A549 (cell line): ENCODE measurements at regions of chr17 and their contacts with region 1.

Region 1: GRCh38 chr17:50783193-50783660 is 15.9 kb upstream of the ANKRD40CL start:
- DNase-seq: peak; percentile 96 to 99
- ATAC-seq: peak; percentile 97 to 99
- H3K4me3 ChIP-seq: no peak overlapping the region
- H3K27ac ChIP-seq: no peak overlapping the region
- H3K4me1 ChIP-seq: 0 out of 3 replicates have a peak, but pooled peaks cover 3% of the 10 kb centered on the region
- CTCF ChIP-seq: peak; percentile 98
- EP300 ChIP-seq: no peak
- POLR2A ChIP-seq: no peak
- RAD21 ChIP-seq: peak; percentile 97 to 98

Region 2: DNA sequence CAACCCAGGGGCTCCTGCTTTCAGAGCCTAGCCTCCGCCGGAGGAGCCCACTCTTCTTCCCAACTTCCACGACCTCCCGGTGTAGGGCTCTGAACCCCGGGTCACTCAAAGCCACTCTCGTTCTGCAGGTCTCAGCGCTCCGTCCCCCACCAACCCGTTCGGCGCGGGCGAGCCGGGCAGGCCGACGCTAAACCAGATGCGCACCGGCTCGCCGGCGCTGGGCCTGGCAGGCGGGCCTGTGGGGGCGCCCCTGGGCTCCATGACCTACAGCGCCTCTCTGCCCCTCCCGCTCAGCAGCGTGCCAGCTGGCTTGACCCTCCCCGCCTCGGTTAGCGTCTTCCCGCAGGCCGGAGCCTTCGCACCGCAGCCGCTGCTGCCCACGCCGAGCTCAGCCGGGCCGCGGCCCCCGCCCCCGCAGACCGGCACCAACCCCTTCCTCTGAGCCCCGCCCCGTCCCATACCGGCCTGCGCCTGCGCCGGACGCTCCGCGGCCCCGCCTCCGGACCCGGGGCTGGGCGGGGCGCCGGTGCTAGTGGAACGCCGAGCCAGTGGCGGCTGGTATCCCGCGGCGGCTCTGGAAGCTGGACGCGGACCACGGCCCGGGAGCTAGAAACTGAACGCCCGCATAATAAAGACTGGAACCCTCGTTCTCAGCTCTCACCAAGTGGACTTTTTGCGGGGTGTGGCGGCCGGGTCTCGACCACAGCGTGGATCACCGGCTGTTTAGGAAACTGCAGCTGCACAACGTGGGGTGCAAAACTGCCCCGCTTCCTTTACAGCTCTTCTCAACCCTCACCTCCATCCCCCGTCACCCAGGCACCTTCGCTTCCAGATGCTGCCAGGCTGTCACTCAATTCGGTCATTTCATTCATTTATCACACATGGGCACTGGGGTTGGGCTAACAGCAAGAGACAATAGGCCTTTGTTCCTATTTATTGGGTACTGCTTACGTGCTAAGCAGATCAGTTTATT is 241.2 kb before region 1 on chr17:
- CTCF ChIA-PET with region 1: interaction called, 13 read pairs
- POLR2A ChIA-PET with region 1: no interaction called
- DNase-seq: peak; percentile 80 to 96
- ATAC-seq: peak; percentile 71 to 85
- H3K4me3 ChIP-seq: peak overlapping the region; percentile 51
- H3K27ac ChIP-seq: peak overlapping the region; percentile 85 to 90
- H3K4me1 ChIP-seq: peaks cover 45% of the 10 kb centered on the region
- CTCF ChIP-seq: peak; percentile 28; the same call in 1 of the 3 replicates
- EP300 ChIP-seq: no peak
- POLR2A ChIP-seq: peak; percentile 92
- RAD21 ChIP-seq: peak in 1 of 2 experiments; percentile 22; a peak in 1 of 5 replicates

Region 3: GRCh38 chr17:50583641-50584040 is 199.6 kb before region 1 on chr17:
- CTCF ChIA-PET with region 1: no interaction called
- POLR2A ChIA-PET with region 1: no interaction called
- DNase-seq: no peak
- ATAC-seq: peak in 1 of 2 experiments; percentile 34; a peak in 3 of 6 replicates
- H3K4me3 ChIP-seq: no peak overlapping the region
- H3K27ac ChIP-seq: no peak overlapping the region
- H3K4me1 ChIP-seq: no peaks in the 10 kb centered on the region
- CTCF ChIP-seq: no peak
- EP300 ChIP-seq: no peak
- POLR2A ChIP-seq: no peak
- RAD21 ChIP-seq: no peak

Region 4: GRCh38 chr17:50771991-50772785 is 11.0 kb before region 1 on chr17:
- CTCF ChIA-PET with region 1: interaction called, 103 read pairs
- POLR2A ChIA-PET with region 1: no interaction called
- DNase-seq: no peak
- ATAC-seq: no peak
- H3K4me3 ChIP-seq: no peak overlapping the region
- H3K27ac ChIP-seq: no peak overlapping the region
- H3K4me1 ChIP-seq: peaks cover 17% of the 10 kb centered on the region
- CTCF ChIP-seq: no peak
- EP300 ChIP-seq: no peak
- POLR2A ChIP-seq: no peak
- RAD21 ChIP-seq: no peak

Region 5: DNA sequence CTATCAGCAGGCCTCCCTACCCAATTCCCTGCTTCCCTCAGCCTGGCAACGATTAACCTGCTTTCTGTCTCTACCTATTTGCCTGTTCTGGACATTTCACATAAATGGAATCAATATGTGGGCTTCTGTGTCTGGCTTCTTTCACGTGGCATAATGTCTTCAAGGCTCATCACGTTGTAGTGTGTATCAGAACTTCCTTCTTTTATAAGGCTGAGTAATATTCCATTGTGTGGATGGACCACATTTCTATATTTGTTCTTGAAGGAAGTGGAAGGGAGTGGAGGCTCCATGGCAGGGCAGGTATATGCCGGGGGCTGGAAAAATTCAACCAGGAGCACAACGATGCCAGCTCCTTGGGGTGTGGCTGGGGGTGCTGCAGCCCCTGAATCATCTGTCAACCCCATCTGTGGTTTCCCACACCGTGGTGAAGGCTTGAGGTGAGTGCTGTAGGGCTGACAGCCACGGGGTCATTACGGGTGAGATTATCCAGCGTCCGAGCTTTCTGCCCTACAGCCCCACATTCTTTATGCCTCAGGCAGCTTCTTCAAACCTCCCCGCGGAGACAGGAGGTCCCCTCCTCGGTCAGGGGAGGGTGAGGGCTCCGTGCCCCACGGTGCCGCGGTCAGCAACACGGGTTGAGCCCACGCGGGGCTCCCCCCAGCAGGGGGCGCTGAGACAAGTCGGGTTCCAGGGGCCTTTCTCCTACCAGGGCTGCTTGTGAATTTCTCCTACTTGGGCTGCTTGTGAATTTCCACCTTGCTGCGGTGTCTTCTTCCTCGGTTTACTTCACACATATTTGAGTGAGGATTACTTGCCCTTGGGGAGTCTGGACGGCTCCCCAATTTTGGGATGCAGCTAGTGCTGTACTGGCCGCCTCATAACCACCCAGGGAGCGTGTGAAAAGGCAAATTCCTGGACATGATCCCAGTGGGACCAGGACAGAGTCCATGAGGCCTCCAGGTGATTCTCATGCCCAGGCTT is 33.8 kb after region 1 on chr17:
- CTCF ChIA-PET with region 1: interaction called, 100 read pairs
- POLR2A ChIA-PET with region 1: no interaction called
- DNase-seq: peak; percentile 43 to 75
- ATAC-seq: peak; percentile 80 to 87
- H3K4me3 ChIP-seq: no peak overlapping the region
- H3K27ac ChIP-seq: peak overlapping the region in 1 of 2 experiments; percentile 7; a peak in 1 of 6 replicates
- H3K4me1 ChIP-seq: peaks cover 8% of the 10 kb centered on the region
- CTCF ChIP-seq: peak; percentile 91
- EP300 ChIP-seq: no peak
- POLR2A ChIP-seq: no peak
- RAD21 ChIP-seq: peak; percentile 49 to 52

Region 6: DNA sequence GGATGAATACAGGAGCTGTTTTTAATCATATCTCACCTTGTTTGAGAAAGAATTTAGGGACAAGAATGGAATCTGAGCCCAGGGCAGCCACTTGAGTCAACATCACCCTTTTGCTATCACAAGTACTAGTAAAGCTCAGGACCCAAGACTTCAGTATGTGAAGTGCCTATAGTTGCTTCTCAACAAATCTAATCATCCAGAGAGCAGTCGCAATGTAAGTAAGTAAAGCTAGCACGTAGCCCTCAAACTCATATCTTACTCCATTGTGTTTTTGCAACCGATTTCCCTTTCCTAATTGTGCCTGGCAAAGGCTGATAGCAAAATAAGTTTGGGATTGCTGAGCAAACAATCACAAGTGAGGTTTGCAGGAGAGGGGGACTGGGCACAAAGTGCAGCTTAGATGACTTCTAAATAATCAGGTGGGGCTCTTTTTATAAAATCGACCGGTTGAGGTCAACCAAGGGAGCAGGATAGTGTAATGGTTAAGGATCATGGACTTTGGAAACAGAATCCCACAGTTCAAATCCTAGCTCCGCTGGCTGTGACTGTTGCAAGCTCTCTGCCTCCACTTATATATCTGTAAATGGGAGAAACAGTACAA is 69.9 kb after region 1 on chr17:
- CTCF ChIA-PET with region 1: interaction called, 324 read pairs
- POLR2A ChIA-PET with region 1: no interaction called
- DNase-seq: no peak
- ATAC-seq: no peak
- H3K4me3 ChIP-seq: no peak overlapping the region
- H3K27ac ChIP-seq: peak overlapping the region in 1 of 2 experiments; percentile 80; a peak in 2 of 6 replicates
- H3K4me1 ChIP-seq: peaks cover 25% of the 10 kb centered on the region
- CTCF ChIP-seq: no peak
- EP300 ChIP-seq: no peak
- POLR2A ChIP-seq: no peak
- RAD21 ChIP-seq: no peak

Region 7: DNA sequence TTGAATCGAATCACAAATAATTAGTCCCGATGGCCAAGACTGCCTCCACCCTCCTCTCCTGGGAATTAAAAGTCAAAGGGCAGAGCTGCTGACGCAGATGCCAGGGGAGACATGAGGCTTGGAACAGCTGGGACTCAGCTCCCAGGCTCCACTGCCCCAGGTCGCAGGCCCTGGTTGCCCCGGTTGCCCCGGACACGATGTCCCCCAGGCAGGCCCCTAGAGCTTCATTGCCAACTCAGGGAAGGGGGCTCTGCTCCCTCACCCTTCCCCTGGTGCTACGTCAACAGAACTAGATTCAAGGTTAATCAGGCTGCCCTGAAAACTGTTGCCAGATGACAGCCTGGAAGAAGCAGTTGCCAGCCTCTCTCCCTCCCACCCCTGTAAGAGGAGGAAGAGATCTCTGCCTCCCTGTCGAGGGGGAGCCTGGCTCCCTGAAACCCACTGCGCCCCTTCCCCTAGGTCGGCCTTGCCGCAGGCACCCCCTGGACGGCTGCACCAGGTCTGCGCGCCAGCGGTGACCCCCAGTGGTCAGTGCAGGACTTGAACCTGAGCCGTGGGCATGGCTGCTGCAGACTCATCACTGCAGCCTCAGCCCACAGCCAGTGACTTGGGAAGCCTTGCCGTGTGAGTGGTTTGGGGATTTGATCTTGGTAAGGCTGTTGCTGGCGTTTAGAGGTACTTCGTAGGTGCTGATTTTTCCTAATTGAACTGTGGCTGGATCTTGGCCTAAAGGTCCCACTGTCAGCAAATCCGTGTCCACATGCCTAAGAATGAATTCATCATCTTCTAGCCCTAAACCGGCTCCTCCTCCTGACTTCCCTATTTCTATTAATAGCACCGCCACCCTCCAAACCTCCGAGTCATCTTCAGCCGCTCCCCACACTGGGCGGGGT is 167.0 kb after region 1 on chr17:
- CTCF ChIA-PET with region 1: interaction called, 155 read pairs
- POLR2A ChIA-PET with region 1: no interaction called
- DNase-seq: peak; percentile 95 to 96
- ATAC-seq: peak; percentile 79 to 84
- H3K4me3 ChIP-seq: 0 out of 3 replicates have a peak overlapping the region, but pooled peaks have one; percentile 3
- H3K27ac ChIP-seq: peak overlapping the region; percentile 93 to 98
- H3K4me1 ChIP-seq: peaks cover 77% of the 10 kb centered on the region
- CTCF ChIP-seq: peak; percentile 99
- EP300 ChIP-seq: no peak
- POLR2A ChIP-seq: no peak
- RAD21 ChIP-seq: peak; percentile 100

Region 8: GRCh38 chr17:51000835-51001638 is 217.8 kb after region 1 on chr17:
- CTCF ChIA-PET with region 1: interaction called, 12 read pairs
- POLR2A ChIA-PET with region 1: no interaction called
- DNase-seq: peak; percentile 62 to 78
- ATAC-seq: peak; percentile 86 to 91; a peak in 5 of 6 replicates
- H3K4me3 ChIP-seq: no peak overlapping the region
- H3K27ac ChIP-seq: no peak overlapping the region
- H3K4me1 ChIP-seq: no peaks in the 10 kb centered on the region
- CTCF ChIP-seq: peak; percentile 84
- EP300 ChIP-seq: no peak
- POLR2A ChIP-seq: no peak
- RAD21 ChIP-seq: peak; percentile 86 to 89